CD4-positive, alpha-beta memory T cell (primary cell): ENCODE measurements at regions of chr19 and their contacts with region 1.

Region 1: DNA sequence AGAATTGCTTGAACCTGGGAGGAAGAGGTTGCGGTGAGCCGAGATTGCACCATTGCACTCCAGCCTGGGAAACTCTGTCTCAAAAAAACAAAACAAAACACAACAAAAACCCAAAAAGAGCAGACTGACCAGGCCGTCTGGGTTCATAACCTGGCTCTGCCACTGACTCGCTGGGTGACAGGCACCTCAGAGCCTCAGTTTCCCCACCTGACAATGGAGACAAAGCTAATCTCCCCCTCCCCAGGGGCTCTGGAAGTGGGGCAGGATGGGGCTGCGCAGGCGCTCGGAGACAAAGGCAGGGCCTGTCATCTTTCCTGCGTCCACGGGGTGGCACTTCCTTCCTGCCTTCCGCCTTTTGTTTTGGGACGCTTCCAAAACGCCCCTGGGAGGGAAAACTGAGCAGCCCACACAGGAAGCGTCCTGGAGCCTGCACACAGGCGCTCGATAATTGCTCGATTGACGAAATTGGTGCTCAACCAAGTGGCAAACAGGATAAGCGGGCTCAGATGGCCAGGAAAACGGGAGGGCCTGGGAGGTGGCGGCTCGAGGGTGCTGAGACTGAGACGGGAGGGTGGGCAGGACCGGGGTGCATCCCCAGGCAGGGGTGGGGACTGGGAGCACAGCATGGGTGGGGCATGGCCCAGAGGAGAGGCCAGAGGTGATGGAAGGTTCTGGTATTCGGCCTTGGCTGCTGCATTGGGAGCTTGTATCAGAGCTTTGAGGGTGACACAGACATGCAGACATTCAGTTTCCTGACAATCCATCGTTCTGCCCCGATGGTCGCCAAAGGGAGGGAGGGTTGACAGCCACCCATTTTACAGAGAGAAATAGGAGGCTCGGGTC is 17.8 kb downstream of the SPC24 start:
- DNase-seq: peak; percentile 52 to 67 (median 54)
- H3K4me3 ChIP-seq: peak overlapping the region; percentile 52 to 60
- H3K4me3 Mint-ChIP-seq: peak overlapping the region; percentile 80 to 92 (median 87)
- H3K27ac ChIP-seq: no peak overlapping the region
- H3K27ac Mint-ChIP-seq: peak overlapping the region in 6 of 7 donors; percentile 13 to 91 (median 86)
- H3K4me1 ChIP-seq: peaks cover 15% of the 10 kb centered on the region
- H3K4me1 Mint-ChIP-seq: peaks cover 8 to 21% (median 9%) of the 10 kb centered on the region in 4 donors
- H3K27me3 ChIP-seq: no peaks in the 10 kb centered on the region
- H3K27me3 Mint-ChIP-seq: no peaks in the 10 kb centered on the region

Region 2: GRCh38 chr19:11179716-11180297 is 42.0 kb after region 1 on chr19:
- CTCF ChIA-PET with region 1: no interaction called
- POLR2A ChIA-PET with region 1: no interaction called
- intact Hi-C with region 1: no loop called
- DNase-seq: no peak
- H3K4me3 ChIP-seq: no peak overlapping the region
- H3K4me3 Mint-ChIP-seq: peak overlapping the region in 2 of 8 donors; percentile 17 to 20
- H3K27ac ChIP-seq: no peak overlapping the region
- H3K27ac Mint-ChIP-seq: peak overlapping the region in 1 of 7 donors; percentile 49
- H3K4me1 ChIP-seq: peaks cover 9% of the 10 kb centered on the region
- H3K4me1 Mint-ChIP-seq: peaks cover 3 to 15% (median 7%) of the 10 kb centered on the region in 4 donors
- H3K27me3 ChIP-seq: no peaks in the 10 kb centered on the region
- H3K27me3 Mint-ChIP-seq: peaks cover 0 to 4% of the 10 kb centered on the region in 2 donors

Region 3: DNA sequence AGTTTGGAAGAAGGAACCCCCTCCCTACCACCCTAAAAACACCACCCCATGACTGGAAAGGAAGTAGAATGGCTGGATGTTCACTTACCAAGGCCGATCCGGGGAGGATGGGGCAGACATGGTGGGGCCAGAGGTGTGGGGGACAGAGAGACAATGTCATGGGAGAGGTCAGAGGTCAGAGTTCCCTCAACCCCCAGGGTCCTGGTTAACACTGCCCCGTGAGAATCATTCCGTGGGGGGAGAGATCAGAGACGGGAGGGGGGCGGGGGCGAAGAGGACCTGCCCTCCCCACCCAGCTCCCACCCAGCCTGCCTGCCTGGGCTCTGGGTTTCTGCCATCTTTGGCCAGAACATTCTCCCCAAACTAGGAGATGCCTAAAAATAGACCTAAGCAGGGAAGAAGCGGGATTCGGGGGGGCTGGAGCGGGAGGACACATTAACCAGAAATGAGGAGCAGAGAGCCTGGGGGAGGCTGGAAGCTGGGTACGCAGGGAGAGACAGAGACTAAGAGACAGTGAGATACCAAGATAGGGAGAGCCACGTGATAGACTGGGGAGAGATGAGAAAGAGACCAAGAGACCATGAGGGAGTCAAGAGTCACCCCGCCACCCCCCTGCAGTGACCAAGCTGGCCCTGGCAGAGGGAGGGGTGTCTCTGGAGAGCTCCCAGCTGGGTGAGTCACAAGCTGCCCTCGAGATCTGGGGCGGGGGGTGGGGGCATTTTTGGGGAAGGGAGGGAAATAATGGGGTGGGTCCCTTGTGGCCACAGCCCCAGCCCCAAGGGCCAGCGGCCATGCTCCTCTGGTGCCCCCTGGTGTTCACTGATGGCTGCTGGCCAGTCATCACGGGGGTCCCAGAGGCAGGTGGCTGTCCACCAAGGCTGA is 65.7 kb after region 1 on chr19:
- CTCF ChIA-PET with region 1: interaction called, 14 read pairs
- POLR2A ChIA-PET with region 1: interaction called, 4 read pairs
- intact Hi-C with region 1: loop called (anchors 1 kb)
- DNase-seq: peak in 1 of 5 donors; percentile 18
- H3K4me3 ChIP-seq: no peak overlapping the region
- H3K4me3 Mint-ChIP-seq: no peak overlapping the region
- H3K27ac ChIP-seq: no peak overlapping the region
- H3K27ac Mint-ChIP-seq: no peak overlapping the region
- H3K4me1 ChIP-seq: no peaks in the 10 kb centered on the region
- H3K4me1 Mint-ChIP-seq: peaks cover 0 to 1% (median 0%) of the 10 kb centered on the region in 4 donors
- H3K27me3 ChIP-seq: no peaks in the 10 kb centered on the region
- H3K27me3 Mint-ChIP-seq: no peaks in the 10 kb centered on the region